Body of pancreas (tissue), 4 donors: ENCODE measurements at regions of chr5 and their contacts with region 1.

Region 1: DNA sequence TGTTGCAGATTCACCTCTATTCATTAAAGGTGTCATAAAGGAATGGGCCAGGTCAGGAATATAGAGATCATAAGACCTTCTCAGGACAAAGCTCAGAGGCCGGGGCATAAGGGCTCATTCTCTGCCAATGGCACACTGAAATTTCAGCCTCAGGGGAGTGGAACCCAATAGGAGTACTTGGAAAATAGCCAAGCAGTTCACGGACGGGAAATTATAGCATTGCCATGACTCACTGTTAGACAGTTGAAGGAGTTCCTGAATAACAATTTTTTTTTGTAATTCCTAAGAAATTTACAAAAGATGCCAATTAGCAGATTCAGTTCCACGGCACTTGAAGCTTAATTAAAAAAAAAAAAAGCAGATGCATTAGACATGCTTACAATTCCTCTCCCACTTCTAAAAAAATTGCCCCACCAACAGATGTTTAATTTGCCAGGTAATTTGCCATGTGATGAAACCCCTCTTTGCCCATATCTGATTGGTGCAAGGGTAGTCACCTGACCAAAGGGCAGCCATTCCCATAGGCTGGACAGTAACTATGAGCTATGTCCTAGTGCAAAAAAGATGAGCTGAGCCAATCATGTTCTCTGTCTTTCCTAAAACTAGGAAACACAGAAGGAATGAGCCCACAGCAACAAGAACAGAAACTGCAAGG is 58.6 kb downstream of the PTCD2 start:
- DNase-seq: peak in 1 of 4 donors; percentile 43
- ATAC-seq: peak; percentile 27
- H3K4me3 ChIP-seq: no peak overlapping the region
- H3K27ac ChIP-seq: no peak overlapping the region
- H3K4me1 ChIP-seq: no peaks in the 10 kb centered on the region
- H3K27me3 ChIP-seq: no peaks in the 10 kb centered on the region
- CTCF ChIP-seq: no peak
- POLR2A ChIP-seq: no peak

Region 2: DNA sequence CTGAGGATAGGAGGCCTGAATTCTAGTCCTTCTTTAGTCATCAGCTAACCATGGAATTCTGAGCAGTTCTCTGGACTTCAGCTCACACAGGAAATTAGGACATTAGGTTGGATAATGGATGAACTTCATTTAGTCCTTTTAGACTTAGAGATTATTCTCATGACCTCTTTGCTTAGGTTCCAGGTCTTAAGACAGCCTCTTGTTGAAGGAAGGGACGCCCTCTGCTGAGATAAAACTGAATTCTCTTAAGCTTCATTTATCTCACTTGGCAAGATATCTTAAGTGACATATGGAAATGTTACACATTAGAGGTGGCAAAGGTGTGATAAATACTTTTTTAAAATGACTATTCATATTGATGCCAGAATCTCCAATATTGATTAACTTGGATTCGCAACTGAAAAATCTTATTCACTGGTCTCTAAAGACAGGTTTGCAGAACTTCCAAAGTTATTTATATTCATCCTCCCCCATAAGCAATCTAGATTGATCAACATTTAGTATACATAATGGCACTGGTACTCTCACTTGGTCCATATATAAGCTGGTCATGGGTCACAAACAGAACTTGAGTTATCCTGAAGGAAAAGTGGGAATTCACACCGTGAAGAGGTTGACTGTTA is 145.3 kb after region 1 on chr5:
- intact Hi-C with region 1: loop called (anchors 10 kb)
- DNase-seq: peak in 1 of 4 donors; percentile 41
- ATAC-seq: peak; percentile 52
- H3K4me3 ChIP-seq: no peak overlapping the region
- H3K27ac ChIP-seq: no peak overlapping the region
- H3K4me1 ChIP-seq: no peaks in the 10 kb centered on the region
- H3K27me3 ChIP-seq: no peaks in the 10 kb centered on the region
- CTCF ChIP-seq: peak; percentile 6 to 75 (median 55)
- POLR2A ChIP-seq: no peak

Region 3: GRCh38 chr5:73471654-73472053 is 1092.9 kb after region 1 on chr5:
- intact Hi-C with region 1: no loop called
- DNase-seq: no peak
- ATAC-seq: no peak
- H3K4me3 ChIP-seq: no peak overlapping the region
- H3K27ac ChIP-seq: no peak overlapping the region
- H3K4me1 ChIP-seq: no peaks in the 10 kb centered on the region
- H3K27me3 ChIP-seq: no peaks in the 10 kb centered on the region
- CTCF ChIP-seq: no peak
- POLR2A ChIP-seq: no peak